ENCODE measurements at regions of chr21 and their contacts with region 1.

Region 1: GRCh38 chr21:44593598-44594405 is 1.5 kb upstream of the KRTAP10-6 start:
- DNase-seq: no peak
- H3K27ac ChIP-seq: no peak overlapping the region
- CTCF ChIP-seq: no peak

Region 2: GRCh38 chr21:44618504-44618903 is 24.7 kb after region 1 on chr21:
- CTCF ChIA-PET with region 1: interaction called, 10 read pairs
- POLR2A ChIA-PET with region 1: no interaction called
- DNase-seq: no peak
- H3K27ac ChIP-seq: no peak overlapping the region
- CTCF ChIP-seq: no peak

Measured in RWPE1 (cell line).